WTC11 (cell line): ENCODE measurements at regions of chr1 and their contacts with region 1.

Region 1: GRCh38 chr1:51768971-51769588 is 109.4 kb downstream of the NRDC start:
- DNase-seq: no peak
- ATAC-seq: peak; percentile 78
- H3K4me3 Mint-ChIP-seq: no peak overlapping the region
- H3K27ac Mint-ChIP-seq: no peak overlapping the region
- H3K4me1 Mint-ChIP-seq: no peaks in the 10 kb centered on the region
- H3K27me3 Mint-ChIP-seq: no peaks in the 10 kb centered on the region
- CTCF ChIP-seq: peak; percentile 69

Region 2: DNA sequence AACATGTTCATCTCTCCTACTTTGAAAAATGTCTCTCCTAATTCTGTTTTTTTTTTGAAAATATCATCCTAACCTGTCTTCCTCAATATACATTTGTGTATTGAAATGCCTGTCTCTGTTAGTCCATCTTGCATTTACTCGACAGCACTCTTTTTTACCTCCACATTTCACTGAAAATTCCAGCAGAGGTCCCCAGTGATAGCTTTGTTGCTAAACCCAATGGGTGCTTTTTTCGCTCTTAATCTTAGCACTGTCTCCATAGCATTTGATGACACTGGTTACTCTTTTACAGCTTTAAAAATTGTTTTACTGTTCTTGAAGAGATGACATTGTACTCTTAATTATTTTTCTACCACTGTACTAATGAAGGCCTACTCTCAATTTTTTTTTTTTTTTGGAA is 141.4 kb before region 1 on chr1:
- CTCF ChIA-PET with region 1: interaction called, 19 read pairs
- POLR2A ChIA-PET with region 1: no interaction called
- DNase-seq: no peak
- ATAC-seq: peak; percentile 78
- H3K4me3 Mint-ChIP-seq: no peak overlapping the region
- H3K27ac Mint-ChIP-seq: no peak overlapping the region
- H3K4me1 Mint-ChIP-seq: no peaks in the 10 kb centered on the region; the same call in 1 of the 2 replicates
- H3K27me3 Mint-ChIP-seq: no peaks in the 10 kb centered on the region
- CTCF ChIP-seq: no peak

Region 3: DNA sequence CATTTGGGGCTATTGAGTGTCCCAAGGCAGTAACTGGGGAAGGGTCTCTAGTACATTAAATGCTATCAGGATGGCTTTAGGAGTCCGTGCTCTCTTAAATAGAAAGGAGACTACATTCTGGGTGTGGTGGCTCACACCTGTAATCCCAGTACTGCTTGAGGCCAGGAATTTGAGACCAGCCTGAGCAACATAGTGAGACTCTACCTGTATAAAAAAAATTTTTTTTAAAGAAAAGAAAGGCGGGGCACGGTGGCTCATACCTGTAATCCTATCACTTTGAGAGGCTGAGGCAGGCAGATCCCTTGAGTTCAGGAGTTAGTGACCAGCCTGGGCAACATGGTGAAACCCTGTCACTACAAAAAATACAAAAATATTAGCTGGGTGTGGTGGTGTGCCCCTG is 130.7 kb before region 1 on chr1:
- CTCF ChIA-PET with region 1: no interaction called
- POLR2A ChIA-PET with region 1: no interaction called
- DNase-seq: no peak
- ATAC-seq: no peak
- H3K4me3 Mint-ChIP-seq: no peak overlapping the region
- H3K27ac Mint-ChIP-seq: no peak overlapping the region
- H3K4me1 Mint-ChIP-seq: peaks cover 3% of the 10 kb centered on the region; the same call in 1 of the 2 replicates
- H3K27me3 Mint-ChIP-seq: no peaks in the 10 kb centered on the region
- CTCF ChIP-seq: no peak

Region 4: GRCh38 chr1:51819810-51820209 is 50.7 kb after region 1 on chr1:
- CTCF ChIA-PET with region 1: no interaction called
- POLR2A ChIA-PET with region 1: no interaction called
- DNase-seq: no peak
- ATAC-seq: no peak
- H3K4me3 Mint-ChIP-seq: no peak overlapping the region
- H3K27ac Mint-ChIP-seq: no peak overlapping the region
- H3K4me1 Mint-ChIP-seq: no peaks in the 10 kb centered on the region
- H3K27me3 Mint-ChIP-seq: no peaks in the 10 kb centered on the region
- CTCF ChIP-seq: no peak

Region 5: DNA sequence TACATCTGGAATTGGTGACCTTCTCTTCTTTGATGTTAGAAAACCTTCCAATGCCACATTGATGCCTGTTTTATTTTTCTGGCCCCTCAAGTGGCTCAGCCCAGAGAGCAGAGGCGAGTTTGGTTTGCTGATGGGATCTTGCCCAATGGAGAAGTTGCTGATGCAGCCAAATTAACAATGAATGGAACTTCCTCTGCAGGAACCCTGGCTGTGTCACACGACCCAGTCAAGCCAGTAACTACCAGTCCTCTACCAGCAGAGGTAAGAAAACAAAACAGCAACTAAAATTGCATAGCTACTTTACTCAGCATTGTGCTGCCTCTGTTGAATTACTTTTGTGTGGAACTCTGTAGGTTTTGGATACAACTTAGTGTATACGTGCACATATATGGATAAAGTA is 499.3 kb after region 1 on chr1:
- CTCF ChIA-PET with region 1: no interaction called
- POLR2A ChIA-PET with region 1: no interaction called
- DNase-seq: peak; percentile 29
- ATAC-seq: peak; percentile 99
- H3K4me3 Mint-ChIP-seq: no peak overlapping the region
- H3K27ac Mint-ChIP-seq: peak overlapping the region; percentile 94
- H3K4me1 Mint-ChIP-seq: peaks cover 16% of the 10 kb centered on the region
- H3K27me3 Mint-ChIP-seq: no peaks in the 10 kb centered on the region
- CTCF ChIP-seq: no peak